H1 (cell line): ENCODE measurements at regions of chr1 and their contacts with region 1.

Region 1: GRCh38 chr1:202135221-202135721 is 9.3 kb downstream of the ARL8A start:
- DNase-seq: peak in 1 of 2 experiments; percentile 69
- H3K4me3 ChIP-seq: no peak overlapping the region
- H3K27ac ChIP-seq: 0 out of 2 replicates have a peak overlapping the region, but pooled peaks have one; percentile 17
- H3K4me1 ChIP-seq: peaks cover 0 to 11% (median 4%) of the 10 kb centered on the region in 4 experiments; a peak in 3 of 7 replicates
- H3K27me3 ChIP-seq: no peaks in the 10 kb centered on the region; a peak in 1 of 7 replicates
- CTCF ChIP-seq: peak in 2 of 3 experiments; percentile 84 to 87; a peak in 3 of 4 replicates
- EP300 ChIP-seq: no peak
- POLR2A ChIP-seq: no peak
- RAD21 ChIP-seq: peak; percentile 77 to 81

Region 2: DNA sequence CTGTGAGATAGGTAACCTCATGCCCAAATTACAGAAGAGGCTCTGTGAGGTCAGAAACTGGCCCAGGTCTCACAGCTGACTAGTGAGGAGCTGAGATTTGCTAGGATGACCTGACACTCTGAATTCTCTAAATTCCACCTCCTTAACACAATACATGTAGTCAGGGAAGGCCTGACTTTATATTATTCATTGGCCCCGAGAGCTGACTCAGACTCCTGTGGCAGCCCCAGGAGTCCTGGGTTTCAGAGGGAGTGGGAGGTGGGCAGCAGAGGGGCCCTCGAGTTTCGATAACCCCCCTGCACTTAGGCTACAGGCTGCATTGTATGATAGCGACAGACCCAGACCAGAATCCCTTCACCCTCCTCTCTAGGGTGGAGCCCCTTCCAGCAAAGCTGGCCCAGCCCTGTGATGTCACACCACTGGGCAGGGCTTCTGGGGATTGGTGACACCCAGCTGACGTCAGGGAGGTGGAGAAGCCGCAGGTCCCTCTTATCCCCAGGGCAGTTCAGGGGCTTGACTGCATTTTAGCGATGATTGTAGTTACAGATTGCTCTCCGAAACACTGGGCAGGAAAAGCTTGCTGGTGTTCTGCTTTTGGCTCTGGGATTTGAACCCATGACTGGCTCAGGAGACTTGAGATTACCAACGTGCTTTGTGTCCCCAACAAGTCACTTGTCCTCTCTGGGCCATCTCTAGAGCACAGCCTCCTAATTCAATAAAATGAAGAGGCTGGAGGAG is 29.6 kb before region 1 on chr1:
- CTCF ChIA-PET with region 1: interaction called, 11 read pairs
- POLR2A ChIA-PET with region 1: interaction called, 4 read pairs
- DNase-seq: peak; percentile 58 to 90
- H3K4me3 ChIP-seq: peak overlapping the region in 1 of 4 experiments; percentile 33; a peak in 1 of 8 replicates
- H3K27ac ChIP-seq: peak overlapping the region; percentile 70; the same call in 1 of the 2 replicates
- H3K4me1 ChIP-seq: peaks cover 19 to 32% (median 20%) of the 10 kb centered on the region in 4 experiments
- H3K27me3 ChIP-seq: no peaks in the 10 kb centered on the region
- CTCF ChIP-seq: no peak
- EP300 ChIP-seq: no peak
- POLR2A ChIP-seq: no peak
- RAD21 ChIP-seq: no peak

Region 3: GRCh38 chr1:202122639-202123335 is 12.5 kb before region 1 on chr1 and contains the start of gene GPR37L1:
- CTCF ChIA-PET with region 1: interaction called, 231 read pairs
- POLR2A ChIA-PET with region 1: interaction called, 6 read pairs
- DNase-seq: peak; percentile 56 to 81
- H3K4me3 ChIP-seq: no peak within 1 kb of the TSS
- H3K27ac ChIP-seq: no peak within 1 kb of the TSS
- H3K4me1 ChIP-seq: peaks cover 0 to 5% (median 4%) of the 10 kb centered on the region in 4 experiments; a peak in 6 of 7 replicates
- H3K27me3 ChIP-seq: no peaks in the 10 kb centered on the region
- CTCF ChIP-seq: peak; percentile 78 to 88 (median 83)
- EP300 ChIP-seq: no peak
- POLR2A ChIP-seq: no peak
- RAD21 ChIP-seq: peak; percentile 52 to 68
- total RNA-seq, gene GPR37L1: 0.08 and 0.13 TPM in 2 replicates

Region 4: GRCh38 chr1:202160377-202160940 is 25.2 kb after region 1 on chr1 and contains the start of gene PTPN7:
- CTCF ChIA-PET with region 1: interaction called, 21 read pairs
- POLR2A ChIA-PET with region 1: no interaction called
- DNase-seq: no peak
- H3K4me3 ChIP-seq: no peak within 1 kb of the TSS
- H3K27ac ChIP-seq: no peak within 1 kb of the TSS
- H3K4me1 ChIP-seq: peaks cover 2 to 29% (median 11%) of the 10 kb centered on the region in 4 experiments
- H3K27me3 ChIP-seq: no peaks in the 10 kb centered on the region
- CTCF ChIP-seq: peak; percentile 13 to 27 (median 15); a peak in 2 of 4 replicates
- EP300 ChIP-seq: no peak
- POLR2A ChIP-seq: no peak
- RAD21 ChIP-seq: no peak
- total RNA-seq, gene PTPN7: not detected in 2 replicates